K562 (cell line): ENCODE measurements at regions of chr3 and their contacts with region 1.

Region 1: DNA sequence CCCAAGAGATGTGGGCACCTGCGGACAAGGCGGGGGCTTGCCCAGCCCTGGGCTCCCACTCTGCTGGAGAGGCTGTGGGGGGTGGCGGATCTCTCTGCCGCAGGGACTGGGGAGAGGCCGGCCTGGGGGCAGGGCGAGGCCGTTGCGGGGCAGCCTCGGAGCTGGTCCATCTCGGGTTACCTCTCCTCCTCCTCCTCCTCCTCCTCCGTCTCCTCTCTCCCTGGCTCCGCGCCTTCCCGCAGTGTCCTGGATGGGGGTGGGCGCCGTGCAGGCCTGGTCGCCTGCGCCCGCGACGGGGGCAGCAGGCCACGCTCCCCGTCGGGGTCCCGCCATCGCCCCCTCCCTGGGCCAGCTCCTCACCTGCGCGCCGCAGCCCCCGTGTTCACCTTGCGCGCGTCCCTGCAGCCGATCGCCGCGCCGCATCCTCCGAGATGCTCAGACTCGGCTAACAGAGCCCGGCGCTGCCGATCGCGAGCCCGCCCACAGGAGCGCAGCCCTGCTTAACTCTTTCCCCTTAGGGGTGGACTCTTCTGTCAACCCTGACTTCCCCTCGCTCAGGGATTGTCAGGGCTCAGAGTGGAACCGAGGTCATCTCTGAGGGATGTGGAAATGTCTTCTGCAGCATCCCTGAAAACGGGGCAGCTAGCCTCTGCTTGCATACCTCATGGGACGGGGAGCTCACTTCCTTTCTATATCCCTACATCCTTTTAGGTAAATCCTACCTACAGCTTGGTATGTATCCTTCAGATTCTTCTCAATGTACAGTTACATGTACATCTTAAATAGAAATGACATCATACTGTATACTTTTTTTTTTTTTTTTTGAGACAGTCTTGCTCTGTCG is at the start of gene PRRT3:
- DNase-seq: peak; percentile 73 to 81 (median 75)
- ATAC-seq: peak; percentile 91
- H3K4me3 ChIP-seq: peak within 1 kb of the TSS; percentile 49
- H3K27ac ChIP-seq: no peak within 1 kb of the TSS
- H3K4me1 ChIP-seq: peaks cover 21 to 34% of the 10 kb centered on the region in 2 experiments
- H3K27me3 ChIP-seq: no peaks in the 10 kb centered on the region
- CTCF ChIP-seq: no peak
- EP300 ChIP-seq: no peak
- POLR2A ChIP-seq: no peak
- RAD21 ChIP-seq: 0 out of 4 replicates have a peak, but pooled peaks of 1 of the 2 experiments have one; percentile 10
- polyA plus RNA-seq, gene PRRT3: 0.06 TPM

Region 2: DNA sequence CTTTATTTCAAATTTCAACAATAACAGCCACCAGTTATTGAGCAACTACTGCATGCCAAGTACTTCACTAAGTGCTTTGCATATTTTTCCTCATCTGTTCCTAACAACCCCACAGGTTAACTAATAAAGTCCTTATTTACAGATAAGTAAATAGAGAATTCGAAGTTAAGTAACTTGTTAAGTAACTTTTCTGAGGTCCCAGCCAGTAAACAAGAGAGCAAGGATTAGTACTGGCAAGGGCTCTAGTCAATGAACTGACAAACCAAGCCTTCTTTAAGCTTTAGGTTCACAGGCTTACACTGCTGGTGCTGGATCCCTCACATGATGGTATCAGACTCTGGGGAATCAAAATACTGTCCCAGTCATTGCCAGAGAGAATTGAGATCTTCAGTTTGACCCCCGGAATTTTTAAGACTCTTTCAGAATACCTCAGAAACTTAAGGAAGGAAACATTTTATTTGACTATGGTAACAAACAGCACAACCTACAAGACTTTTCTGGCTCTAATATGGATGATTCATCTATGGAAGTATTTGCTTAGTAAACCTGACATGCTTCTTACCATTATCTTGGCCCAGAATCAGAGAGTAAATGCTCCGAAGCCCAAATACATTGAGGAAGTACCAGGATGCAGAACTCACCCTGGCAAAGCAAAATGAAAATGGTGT is 18.0 kb after region 1 on chr3:
- CTCF ChIA-PET with region 1: no interaction called
- POLR2A ChIA-PET with region 1: interaction called, 29 read pairs
- in situ Hi-C with region 1: no loop called
- intact Hi-C with region 1: no loop called
- DNase-seq: no peak
- ATAC-seq: no peak
- H3K4me3 ChIP-seq: no peak overlapping the region
- H3K27ac ChIP-seq: no peak overlapping the region
- H3K4me1 ChIP-seq: no peaks in the 10 kb centered on the region
- H3K27me3 ChIP-seq: no peaks in the 10 kb centered on the region
- CTCF ChIP-seq: no peak
- EP300 ChIP-seq: no peak
- POLR2A ChIP-seq: no peak
- RAD21 ChIP-seq: no peak

Region 3: GRCh38 chr3:9976721-9977709 is 24.8 kb after region 1 on chr3:
- CTCF ChIA-PET with region 1: no interaction called
- POLR2A ChIA-PET with region 1: interaction called, 10 read pairs
- in situ Hi-C with region 1: no loop called
- intact Hi-C with region 1: no loop called
- DNase-seq: peak; percentile 80 to 98 (median 86)
- ATAC-seq: peak; percentile 93
- H3K4me3 ChIP-seq: peak overlapping the region; percentile 27
- H3K27ac ChIP-seq: peak overlapping the region; percentile 99
- H3K4me1 ChIP-seq: peaks cover 37 to 43% of the 10 kb centered on the region in 2 experiments
- H3K27me3 ChIP-seq: no peaks in the 10 kb centered on the region
- CTCF ChIP-seq: no peak
- EP300 ChIP-seq: peak; percentile 94
- POLR2A ChIP-seq: peak; percentile 52
- RAD21 ChIP-seq: 0 out of 4 replicates have a peak, but pooled peaks of 1 of the 2 experiments have one; percentile 13

Region 4: GRCh38 chr3:9986237-9986725 is 34.1 kb after region 1 on chr3:
- CTCF ChIA-PET with region 1: no interaction called
- POLR2A ChIA-PET with region 1: interaction called, 5 read pairs
- in situ Hi-C with region 1: no loop called
- intact Hi-C with region 1: loop called (anchors 5 kb)
- DNase-seq: no peak
- ATAC-seq: peak; percentile 52
- H3K4me3 ChIP-seq: peak overlapping the region; percentile 96
- H3K27ac ChIP-seq: peak overlapping the region; percentile 75
- H3K4me1 ChIP-seq: peaks cover 10 to 12% of the 10 kb centered on the region in 2 experiments; a peak in 4 of 5 replicates
- H3K27me3 ChIP-seq: no peaks in the 10 kb centered on the region
- CTCF ChIP-seq: 0 out of 6 replicates have a peak, but pooled peaks of 1 of the 3 experiments have one; percentile 0
- EP300 ChIP-seq: no peak
- POLR2A ChIP-seq: no peak
- RAD21 ChIP-seq: no peak

Region 5: DNA sequence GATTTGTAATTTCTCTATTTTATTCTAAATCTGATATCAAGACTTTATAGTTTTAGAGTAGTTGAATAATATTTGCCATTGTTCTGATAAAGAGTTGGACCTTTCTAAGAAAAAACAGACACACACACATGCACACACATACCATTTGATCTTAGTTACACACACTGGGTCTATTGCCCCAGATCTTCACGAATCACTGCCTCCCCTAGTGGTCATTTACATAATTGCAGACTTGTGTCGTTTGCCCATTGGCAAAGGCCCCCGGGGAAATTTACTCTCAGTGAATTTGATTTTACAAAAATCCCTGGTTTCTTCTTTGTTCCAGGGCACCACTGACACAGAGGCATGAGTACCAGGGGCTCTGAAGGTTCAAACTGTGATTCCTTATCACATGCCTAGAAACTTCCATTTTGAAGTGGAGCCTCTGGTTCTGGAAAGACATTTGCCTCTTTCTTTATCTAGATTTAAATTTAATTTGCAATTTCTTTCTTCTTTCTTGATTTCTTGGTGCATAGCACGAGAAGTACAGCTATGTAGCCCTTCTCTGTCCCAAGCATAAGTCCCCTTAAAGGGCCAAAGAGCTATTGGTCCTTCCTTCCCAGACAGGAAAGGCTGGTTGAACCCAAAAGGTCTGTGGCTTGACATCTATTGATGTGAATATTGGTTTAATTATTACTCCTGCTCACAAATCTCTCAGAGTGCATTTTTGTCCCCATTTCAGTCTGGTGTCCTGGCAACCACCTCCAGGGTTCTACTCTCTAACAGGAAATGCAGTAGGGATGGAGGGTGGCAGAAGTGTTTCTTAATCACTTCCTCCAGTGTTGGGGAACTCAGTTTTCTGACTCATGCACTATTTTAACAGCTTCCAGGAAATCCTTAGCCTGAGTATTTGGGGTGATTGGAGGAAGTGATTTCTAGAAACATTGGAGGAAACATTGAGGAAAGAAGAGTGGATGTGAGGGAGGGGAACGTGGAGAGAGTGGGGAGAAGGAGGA is 831.5 kb after region 1 on chr3:
- CTCF ChIA-PET with region 1: no interaction called
- POLR2A ChIA-PET with region 1: no interaction called
- in situ Hi-C with region 1: no loop called
- intact Hi-C with region 1: no loop called
- DNase-seq: peak; percentile 60 to 73 (median 64)
- ATAC-seq: peak; percentile 87
- H3K4me3 ChIP-seq: no peak overlapping the region
- H3K27ac ChIP-seq: no peak overlapping the region
- H3K4me1 ChIP-seq: no peaks in the 10 kb centered on the region
- H3K27me3 ChIP-seq: no peaks in the 10 kb centered on the region
- CTCF ChIP-seq: peak; percentile 71 to 84 (median 80)
- EP300 ChIP-seq: no peak
- POLR2A ChIP-seq: no peak
- RAD21 ChIP-seq: peak; percentile 25 to 53; a peak in 2 of 4 replicates